ENCODE measurements at regions of chr16 and their contacts with region 1.

Region 1: DNA sequence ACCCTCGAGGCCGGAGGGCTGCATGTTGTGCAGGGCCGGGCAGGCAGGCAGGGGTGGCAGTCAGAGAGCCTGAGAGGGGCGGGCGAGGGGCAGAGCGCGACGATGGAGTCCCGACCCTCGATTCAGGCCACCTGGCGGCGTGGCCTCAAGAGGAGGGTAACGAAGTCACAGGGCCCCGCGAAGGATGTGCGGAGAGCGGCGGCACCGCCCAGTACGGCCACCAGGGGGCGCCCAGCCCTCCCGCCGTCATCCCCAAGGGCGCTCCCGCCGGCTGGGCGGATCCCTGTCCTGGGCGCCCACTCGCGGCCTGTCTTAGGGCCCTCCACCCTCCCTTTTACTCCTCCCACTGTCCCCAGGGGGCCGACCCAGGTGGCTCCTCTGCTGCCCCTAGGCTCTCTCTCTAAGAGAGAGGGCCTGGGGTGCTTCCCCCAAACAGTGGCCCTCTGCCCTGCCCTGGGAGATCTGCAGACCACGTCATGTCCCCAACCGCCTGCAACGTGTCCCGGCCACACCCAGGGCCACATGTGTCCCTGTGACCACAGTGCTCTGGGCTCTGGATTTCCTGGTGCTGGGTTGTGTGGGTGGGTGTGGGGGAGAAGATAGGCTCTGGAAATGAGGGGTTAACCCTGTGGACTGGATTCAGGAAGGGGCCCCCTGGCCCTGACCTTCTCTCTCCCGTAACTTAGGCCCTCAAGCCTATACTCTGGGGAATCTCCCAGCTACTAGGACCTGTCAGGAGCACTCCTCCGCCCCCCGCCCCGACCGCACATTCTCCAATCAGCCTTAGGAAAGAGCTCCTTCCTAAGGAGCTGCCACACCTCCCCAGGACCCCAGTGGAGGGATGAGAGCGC is 5.9 kb downstream of the DPEP2 start:
- DNase-seq: peak; percentile 88
- H3K4me3 Mint-ChIP-seq: peak overlapping the region; percentile 78
- H3K27ac Mint-ChIP-seq: peak overlapping the region; percentile 96
- H3K4me1 Mint-ChIP-seq: peaks cover 41% of the 10 kb centered on the region
- H3K27me3 Mint-ChIP-seq: no peaks in the 10 kb centered on the region

Region 2: DNA sequence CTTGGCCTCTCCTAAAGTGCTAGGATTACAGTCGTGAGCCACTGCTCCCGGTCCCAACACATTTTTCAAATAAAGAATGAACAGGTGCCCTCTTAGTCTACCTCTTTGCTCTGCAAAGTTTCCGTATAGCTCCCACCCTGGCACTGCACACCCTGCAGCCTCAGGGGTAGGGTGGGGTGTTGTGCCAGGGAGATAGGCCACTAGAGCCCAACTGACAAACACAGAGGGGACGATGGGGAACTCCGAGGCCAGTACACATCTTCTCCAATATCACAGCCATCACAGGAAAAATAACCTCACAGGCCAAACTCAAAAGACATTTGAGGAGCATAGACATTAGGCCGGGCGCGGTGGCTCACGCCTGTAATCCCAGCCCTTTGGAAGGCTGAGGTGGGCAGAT is 22.3 kb before region 1 on chr16:
- CTCF ChIA-PET with region 1: no interaction called
- DNase-seq: no peak
- H3K4me3 Mint-ChIP-seq: peak overlapping the region; percentile 26
- H3K27ac Mint-ChIP-seq: no peak overlapping the region
- H3K4me1 Mint-ChIP-seq: peaks cover 27% of the 10 kb centered on the region
- H3K27me3 Mint-ChIP-seq: peaks cover 41% of the 10 kb centered on the region

Region 3: GRCh38 chr16:68040507-68041288 is 47.3 kb after region 1 on chr16:
- CTCF ChIA-PET with region 1: interaction called, 61 read pairs
- DNase-seq: peak; percentile 94
- H3K4me3 Mint-ChIP-seq: no peak overlapping the region
- H3K27ac Mint-ChIP-seq: peak overlapping the region; percentile 76
- H3K4me1 Mint-ChIP-seq: peaks cover 23% of the 10 kb centered on the region
- H3K27me3 Mint-ChIP-seq: no peaks in the 10 kb centered on the region

Measured in activated naive CD4-positive, alpha-beta T cell treated with anti-CD3 and anti-CD28 coated beads, Interleukin-2, amount 10 ng/mL, durations not matched to agents 7 days and 5 days (primary cell).